Activated CD4-positive, alpha-beta T cell treated with anti-CD3 and anti-CD28 coated beads for 36 hours (primary cell): ENCODE measurements at regions of chr4 and their contacts with region 1.

Region 1: GRCh38 chr4:75989846-75990528 is 758 bp downstream of the SDAD1 start:
- DNase-seq: no peak
- ATAC-seq: no peak
- H3K4me3 Mint-ChIP-seq: peak overlapping the region; percentile 83
- H3K27ac Mint-ChIP-seq: peak overlapping the region; percentile 88
- H3K4me1 Mint-ChIP-seq: peaks cover 29% of the 10 kb centered on the region
- H3K27me3 Mint-ChIP-seq: no peaks in the 10 kb centered on the region

Region 2: GRCh38 chr4:75940692-75941253 is 49.2 kb before region 1 on chr4 and contains the start of gene NAAA:
- CTCF ChIA-PET with region 1: interaction called, 4 read pairs
- POLR2A ChIA-PET with region 1: no interaction called
- intact Hi-C with region 1: loop called (anchors 1 to 2 kb)
- DNase-seq: peak; percentile 87
- ATAC-seq: peak; percentile 85
- H3K4me3 Mint-ChIP-seq: peak within 1 kb of the TSS; percentile 97
- H3K27ac Mint-ChIP-seq: peak within 1 kb of the TSS; percentile 97
- H3K4me1 Mint-ChIP-seq: peaks cover 7% of the 10 kb centered on the region
- H3K27me3 Mint-ChIP-seq: no peaks in the 10 kb centered on the region
- total RNA-seq, gene NAAA: 21.2 to 26.8 TPM

Region 3: DNA sequence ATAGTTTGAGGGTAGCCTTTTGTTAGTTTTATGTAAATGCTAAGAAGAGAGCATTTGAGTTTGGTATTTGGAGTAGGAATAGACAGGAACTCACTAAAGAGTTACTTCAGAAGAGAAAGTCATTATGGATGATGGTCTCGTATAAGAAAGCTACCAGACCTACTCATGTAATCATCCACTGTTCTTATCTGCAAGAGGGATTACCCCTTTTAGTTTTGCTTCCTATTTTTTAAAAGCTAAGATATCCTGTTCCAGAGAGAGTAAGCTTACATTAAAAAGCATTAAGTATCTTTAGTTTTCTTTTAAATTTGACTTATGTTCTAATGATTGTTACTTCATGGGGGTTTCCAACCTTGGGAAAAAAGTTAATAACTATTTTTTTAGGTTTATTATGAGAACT is 72.0 kb after region 1 on chr4:
- CTCF ChIA-PET with region 1: interaction called, 24 read pairs
- POLR2A ChIA-PET with region 1: no interaction called
- intact Hi-C with region 1: loop called (anchors 1 kb)
- DNase-seq: no peak
- ATAC-seq: no peak
- H3K4me3 Mint-ChIP-seq: no peak overlapping the region
- H3K27ac Mint-ChIP-seq: no peak overlapping the region
- H3K4me1 Mint-ChIP-seq: peaks cover 47% of the 10 kb centered on the region
- H3K27me3 Mint-ChIP-seq: peaks cover 17% of the 10 kb centered on the region

Region 4: GRCh38 chr4:76067652-76068286 is 77.8 kb after region 1 on chr4:
- CTCF ChIA-PET with region 1: interaction called, 27 read pairs
- POLR2A ChIA-PET with region 1: no interaction called
- intact Hi-C with region 1: loop called (anchors 1 kb)
- DNase-seq: peak; percentile 87
- ATAC-seq: peak; percentile 88
- H3K4me3 Mint-ChIP-seq: no peak overlapping the region
- H3K27ac Mint-ChIP-seq: no peak overlapping the region
- H3K4me1 Mint-ChIP-seq: no peaks in the 10 kb centered on the region
- H3K27me3 Mint-ChIP-seq: peaks cover 2% of the 10 kb centered on the region

Region 5: DNA sequence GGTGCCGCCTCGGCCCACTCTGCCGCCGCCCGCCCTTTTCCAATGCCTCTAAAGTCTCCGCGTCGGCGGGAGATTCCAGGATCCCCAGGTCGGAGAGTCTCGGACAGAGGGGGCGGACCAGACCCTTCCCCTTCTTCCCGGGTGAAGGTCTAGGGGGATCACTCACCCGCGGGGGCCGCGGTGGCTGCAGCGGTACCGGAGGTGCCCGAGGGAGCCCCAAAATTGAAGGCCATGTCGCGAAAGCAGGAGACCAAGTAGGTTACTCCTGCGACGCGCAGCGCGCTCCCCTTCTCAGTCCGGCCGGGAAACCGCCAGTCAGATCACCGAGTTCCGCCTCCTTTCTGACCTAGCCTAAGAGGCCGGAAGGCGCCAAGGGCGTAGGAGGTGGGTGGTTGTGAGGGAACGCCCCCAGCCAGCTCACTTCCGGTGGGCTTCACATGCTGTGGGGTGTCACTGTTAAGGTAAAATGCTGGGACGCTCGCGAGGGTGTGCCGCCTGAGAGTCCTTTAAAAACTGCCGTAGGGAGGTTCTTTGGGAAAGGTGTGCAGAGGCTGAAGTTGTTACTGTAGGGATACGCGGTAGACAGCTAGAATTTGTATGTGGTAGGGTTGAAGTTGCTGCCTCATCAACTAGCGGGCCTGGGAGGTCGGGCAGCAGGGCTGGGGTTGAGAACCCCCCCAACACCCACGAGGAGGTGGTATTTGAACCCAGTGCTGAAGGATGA is 158.3 kb after region 1 on chr4 and contains the start of gene NUP54:
- CTCF ChIA-PET with region 1: interaction called, 3 read pairs
- POLR2A ChIA-PET with region 1: interaction called, 3 read pairs
- intact Hi-C with region 1: loop called (anchors 1 kb)
- DNase-seq: peak; percentile 97
- ATAC-seq: peak; percentile 97
- H3K4me3 Mint-ChIP-seq: peak within 1 kb of the TSS; percentile 86
- H3K27ac Mint-ChIP-seq: peak within 1 kb of the TSS; percentile 89
- H3K4me1 Mint-ChIP-seq: peaks cover 25% of the 10 kb centered on the region
- H3K27me3 Mint-ChIP-seq: no peaks in the 10 kb centered on the region
- total RNA-seq, gene NUP54: 58.2 to 67.3 TPM